Activated naive CD4-positive, alpha-beta T cell treated with anti-CD3 and anti-CD28 coated beads for 36 hours (primary cell): ENCODE measurements at regions of chr6 and their contacts with region 1.

Region 1: GRCh38 chr6:8983188-8983688 is 547.9 kb upstream of the SLC35B3 start:
- DNase-seq: peak; percentile 69
- H3K4me3 Mint-ChIP-seq: no peak overlapping the region
- H3K27ac Mint-ChIP-seq: no peak overlapping the region
- H3K4me1 Mint-ChIP-seq: peaks cover 2% of the 10 kb centered on the region
- H3K27me3 Mint-ChIP-seq: peaks cover 36% of the 10 kb centered on the region

Region 2: GRCh38 chr6:8382434-8382833 is 600.8 kb before region 1 on chr6:
- CTCF ChIA-PET with region 1: no interaction called
- intact Hi-C with region 1: no loop called
- DNase-seq: no peak
- H3K4me3 Mint-ChIP-seq: no peak overlapping the region
- H3K27ac Mint-ChIP-seq: no peak overlapping the region
- H3K4me1 Mint-ChIP-seq: no peaks in the 10 kb centered on the region
- H3K27me3 Mint-ChIP-seq: peaks cover 7% of the 10 kb centered on the region

Region 3: GRCh38 chr6:8958894-8959511 is 24.2 kb before region 1 on chr6:
- CTCF ChIA-PET with region 1: no interaction called
- intact Hi-C with region 1: no loop called
- DNase-seq: no peak
- H3K4me3 Mint-ChIP-seq: no peak overlapping the region
- H3K27ac Mint-ChIP-seq: no peak overlapping the region
- H3K4me1 Mint-ChIP-seq: no peaks in the 10 kb centered on the region
- H3K27me3 Mint-ChIP-seq: peaks cover 2% of the 10 kb centered on the region

Region 4: GRCh38 chr6:9380568-9380967 is 397.3 kb after region 1 on chr6:
- CTCF ChIA-PET with region 1: no interaction called
- intact Hi-C with region 1: no loop called
- DNase-seq: no peak
- H3K4me3 Mint-ChIP-seq: no peak overlapping the region
- H3K27ac Mint-ChIP-seq: no peak overlapping the region
- H3K4me1 Mint-ChIP-seq: no peaks in the 10 kb centered on the region
- H3K27me3 Mint-ChIP-seq: no peaks in the 10 kb centered on the region

Region 5: GRCh38 chr6:9412951-9413559 is 429.8 kb after region 1 on chr6:
- CTCF ChIA-PET with region 1: interaction called, 5 read pairs
- intact Hi-C with region 1: loop called (anchors 1 kb)
- DNase-seq: peak; percentile 29
- H3K4me3 Mint-ChIP-seq: no peak overlapping the region
- H3K27ac Mint-ChIP-seq: no peak overlapping the region
- H3K4me1 Mint-ChIP-seq: no peaks in the 10 kb centered on the region
- H3K27me3 Mint-ChIP-seq: no peaks in the 10 kb centered on the region